ENCODE measurements at regions of chr9 and their contacts with region 1.

Region 1: DNA sequence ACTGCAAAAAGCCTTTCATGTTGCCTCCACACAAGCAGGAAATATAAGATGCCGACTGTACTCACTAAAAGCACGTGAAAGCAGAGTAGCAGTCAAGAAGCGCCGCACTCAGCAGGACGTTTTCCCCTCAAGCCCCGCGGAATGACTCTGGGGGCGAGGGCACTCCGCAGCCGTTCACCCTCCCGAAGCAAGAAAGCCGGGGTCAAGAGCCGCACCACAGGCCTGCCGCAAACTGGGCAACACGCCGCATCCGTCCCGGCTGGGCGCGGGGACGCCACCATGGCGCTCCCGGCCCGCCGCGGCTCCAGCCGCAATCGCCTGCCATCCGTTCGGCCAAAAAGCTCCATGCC is 364 bp downstream of the RPS6 start:
- H3K4me3 Mint-ChIP-seq: peak overlapping the region; percentile 96
- H3K27ac Mint-ChIP-seq: peak overlapping the region; percentile 97
- H3K4me1 Mint-ChIP-seq: peaks cover 36% of the 10 kb centered on the region
- H3K27me3 Mint-ChIP-seq: no peaks in the 10 kb centered on the region

Region 2: GRCh38 chr9:19313573-19313972 is 66.1 kb before region 1 on chr9:
- intact Hi-C with region 1: no loop called
- H3K4me3 Mint-ChIP-seq: no peak overlapping the region
- H3K27ac Mint-ChIP-seq: no peak overlapping the region
- H3K4me1 Mint-ChIP-seq: no peaks in the 10 kb centered on the region
- H3K27me3 Mint-ChIP-seq: no peaks in the 10 kb centered on the region

Region 3: GRCh38 chr9:19408693-19409400 is 29.2 kb after region 1 on chr9 and contains the start of gene ACER2:
- intact Hi-C with region 1: loop called (anchors 2 kb)
- H3K4me3 Mint-ChIP-seq: peak within 1 kb of the TSS; percentile 91
- H3K27ac Mint-ChIP-seq: peak within 1 kb of the TSS; percentile 33
- H3K4me1 Mint-ChIP-seq: peaks cover 19% of the 10 kb centered on the region
- H3K27me3 Mint-ChIP-seq: peaks cover 17% of the 10 kb centered on the region

Measured in dendritic cell treated with granulocyte-macrophage colony-stimulating factor and Interleukin-4, amounts not matched to agents 40 ng/mL and 50 ng/mL, for 4 days (primary cell).